ENCODE measurements at regions of chr11 and their contacts with region 1.

Region 1: DNA sequence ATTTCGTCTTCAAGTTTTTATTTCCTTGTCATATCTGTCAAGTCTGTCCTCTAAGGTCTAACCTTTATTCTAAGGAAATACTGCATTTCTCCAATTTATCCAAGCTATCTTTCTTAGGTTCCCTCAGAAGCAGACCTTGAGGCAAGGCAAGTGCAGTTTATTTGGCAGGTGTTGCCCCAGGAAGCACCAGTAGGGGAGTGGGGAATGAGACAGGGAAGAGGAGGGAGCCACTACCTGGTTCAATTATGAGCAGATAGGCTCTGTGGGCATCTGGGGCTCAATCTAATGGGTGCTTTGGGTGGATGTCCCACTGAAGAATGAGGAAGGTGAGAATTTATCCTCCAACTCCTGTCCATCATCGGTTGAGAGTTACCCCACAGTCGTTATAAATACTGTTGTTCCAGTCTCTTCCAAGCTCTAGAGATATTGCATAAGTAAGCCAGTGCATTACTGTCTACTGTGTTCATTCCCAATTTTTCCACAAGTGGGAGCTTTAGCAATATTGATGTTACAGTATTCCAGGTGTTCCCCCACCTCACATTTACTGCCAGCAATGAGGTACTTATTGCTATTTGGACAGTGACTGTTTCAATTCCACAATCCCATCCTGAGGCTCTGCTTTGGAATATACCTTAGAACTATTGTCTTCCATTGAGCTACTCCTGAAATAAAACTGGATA is 154.9 kb upstream of the CEP126 start:
- DNase-seq: peak; percentile 40
- ATAC-seq: peak; percentile 86
- H3K4me3 ChIP-seq: no peak overlapping the region
- H3K27ac ChIP-seq: no peak overlapping the region
- H3K4me1 ChIP-seq: peaks cover 9 to 22% of the 10 kb centered on the region in 2 experiments
- H3K27me3 ChIP-seq: no peaks in the 10 kb centered on the region
- CTCF ChIP-seq: peak; percentile 41 to 61 (median 54); a peak in 5 of 6 replicates
- POLR2A ChIP-seq: no peak
- RAD21 ChIP-seq: peak; percentile 63

Region 2: GRCh38 chr11:101487775-101488174 is 272.1 kb before region 1 on chr11:
- CTCF ChIA-PET with region 1: no interaction called
- POLR2A ChIA-PET with region 1: no interaction called
- RAD21 ChIA-PET with region 1: no interaction called
- intact Hi-C with region 1: no loop called
- DNase-seq: no peak
- ATAC-seq: no peak
- H3K4me3 ChIP-seq: no peak overlapping the region
- H3K27ac ChIP-seq: no peak overlapping the region
- H3K4me1 ChIP-seq: no peaks in the 10 kb centered on the region
- H3K27me3 ChIP-seq: no peaks in the 10 kb centered on the region
- CTCF ChIP-seq: no peak
- POLR2A ChIP-seq: no peak
- RAD21 ChIP-seq: no peak

Region 3: GRCh38 chr11:101741479-101742175 is 18.3 kb before region 1 on chr11:
- CTCF ChIA-PET with region 1: interaction called, 12 read pairs
- POLR2A ChIA-PET with region 1: no interaction called
- RAD21 ChIA-PET with region 1: no interaction called
- intact Hi-C with region 1: no loop called
- DNase-seq: no peak
- ATAC-seq: no peak
- H3K4me3 ChIP-seq: no peak overlapping the region
- H3K27ac ChIP-seq: no peak overlapping the region
- H3K4me1 ChIP-seq: no peaks in the 10 kb centered on the region
- H3K27me3 ChIP-seq: no peaks in the 10 kb centered on the region
- CTCF ChIP-seq: no peak
- POLR2A ChIP-seq: no peak
- RAD21 ChIP-seq: no peak

Region 4: DNA sequence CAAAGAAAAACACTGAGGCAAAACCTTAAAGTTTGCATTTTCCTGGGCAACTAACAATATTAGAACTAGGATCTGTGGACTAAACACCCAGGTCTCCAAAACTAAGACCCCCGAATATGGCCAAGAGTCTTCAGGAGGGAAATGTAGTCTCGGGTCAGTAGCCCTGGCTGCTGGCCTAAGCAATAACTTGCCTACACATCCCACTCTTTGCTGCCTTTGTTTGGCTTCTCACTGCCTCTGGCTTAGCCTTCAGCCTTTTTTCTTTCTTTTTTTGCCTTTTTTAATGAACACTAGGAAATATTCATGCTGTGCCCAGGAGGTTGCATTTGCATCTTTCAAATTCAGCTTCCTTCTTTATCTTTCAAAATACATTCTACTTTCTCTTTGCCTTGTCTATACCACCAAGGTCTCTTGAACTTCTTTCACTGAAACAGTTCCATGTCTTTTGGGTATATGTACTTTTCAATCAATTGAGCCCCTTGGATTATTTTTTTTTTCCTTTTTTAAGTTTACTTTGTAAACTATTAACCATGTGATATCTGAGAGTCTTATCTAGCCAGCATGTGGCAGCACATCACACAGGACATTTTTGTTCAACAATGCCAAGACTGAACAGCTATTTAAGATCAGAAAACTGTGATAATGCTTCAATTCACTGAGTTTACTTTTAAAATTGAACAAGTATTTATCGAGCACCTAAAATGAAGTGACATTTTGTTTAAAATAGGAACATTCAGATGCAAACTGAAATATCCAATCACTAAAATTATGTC is 11.2 kb before region 1 on chr11:
- CTCF ChIA-PET with region 1: interaction called, 22 read pairs
- POLR2A ChIA-PET with region 1: interaction called, 8 read pairs
- RAD21 ChIA-PET with region 1: no interaction called
- intact Hi-C with region 1: no loop called
- DNase-seq: no peak
- ATAC-seq: no peak
- H3K4me3 ChIP-seq: no peak overlapping the region
- H3K27ac ChIP-seq: no peak overlapping the region
- H3K4me1 ChIP-seq: no peaks in the 10 kb centered on the region
- H3K27me3 ChIP-seq: no peaks in the 10 kb centered on the region
- CTCF ChIP-seq: no peak
- POLR2A ChIP-seq: no peak
- RAD21 ChIP-seq: peak; percentile 17; the same call in 1 of the 2 replicates

Measured in HCT116 (cell line).